GM13977 (cell line): ENCODE measurements at regions of chr17 and their contacts with region 1.

Region 1: DNA sequence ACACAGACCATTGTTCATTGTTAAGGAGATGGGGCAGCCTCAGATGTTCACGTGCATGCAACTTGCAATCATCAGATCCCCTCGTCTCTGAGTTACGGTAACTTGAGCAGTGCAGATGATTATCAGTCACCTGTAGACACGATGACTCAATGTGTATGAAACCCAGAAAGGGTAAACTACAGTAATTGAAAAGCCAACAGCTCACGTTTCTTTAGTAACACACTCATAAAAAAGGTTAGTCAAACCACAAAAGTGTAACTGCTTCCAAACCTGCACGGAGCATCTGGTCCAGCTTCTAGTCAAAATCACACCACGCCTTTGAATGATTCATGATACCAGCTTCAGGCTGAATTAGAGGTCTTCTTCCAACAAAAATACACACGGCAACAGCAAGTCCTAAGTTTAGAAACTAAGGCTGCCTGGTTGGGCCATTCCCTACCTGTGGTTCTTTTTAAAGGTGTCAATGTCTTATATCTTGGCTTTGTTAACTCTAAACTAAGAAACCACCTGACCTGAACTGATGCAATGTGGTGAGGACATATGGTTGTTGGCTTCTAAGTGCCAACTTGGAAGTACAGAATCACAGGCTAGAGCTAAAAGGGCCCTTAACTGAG is 32.3 kb downstream of the GRB7 start:
- DNase-seq: peak; percentile 60
- CTCF ChIP-seq: no peak

Region 2: DNA sequence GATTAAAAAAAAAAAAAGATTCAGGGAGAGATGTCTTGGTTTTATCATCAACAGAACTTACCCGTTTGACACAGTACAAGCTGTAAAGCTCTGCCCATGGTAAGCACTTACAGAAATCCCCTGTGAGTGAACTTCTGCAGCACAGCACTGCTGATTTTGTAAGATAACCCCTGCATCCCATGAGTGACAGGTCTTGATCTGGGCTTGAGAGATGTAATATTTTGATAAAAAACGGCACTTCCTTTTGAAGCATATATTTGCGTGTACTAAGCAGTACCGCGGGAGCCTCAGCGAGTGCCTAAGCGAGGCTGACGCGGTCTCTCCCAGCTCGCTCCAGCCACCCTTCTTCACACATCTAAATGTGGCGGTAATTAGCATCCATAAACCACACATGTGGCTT is 43.5 kb after region 1 on chr17:
- in situ Hi-C with region 1: no loop called
- DNase-seq: no peak
- CTCF ChIP-seq: no peak

Region 3: DNA sequence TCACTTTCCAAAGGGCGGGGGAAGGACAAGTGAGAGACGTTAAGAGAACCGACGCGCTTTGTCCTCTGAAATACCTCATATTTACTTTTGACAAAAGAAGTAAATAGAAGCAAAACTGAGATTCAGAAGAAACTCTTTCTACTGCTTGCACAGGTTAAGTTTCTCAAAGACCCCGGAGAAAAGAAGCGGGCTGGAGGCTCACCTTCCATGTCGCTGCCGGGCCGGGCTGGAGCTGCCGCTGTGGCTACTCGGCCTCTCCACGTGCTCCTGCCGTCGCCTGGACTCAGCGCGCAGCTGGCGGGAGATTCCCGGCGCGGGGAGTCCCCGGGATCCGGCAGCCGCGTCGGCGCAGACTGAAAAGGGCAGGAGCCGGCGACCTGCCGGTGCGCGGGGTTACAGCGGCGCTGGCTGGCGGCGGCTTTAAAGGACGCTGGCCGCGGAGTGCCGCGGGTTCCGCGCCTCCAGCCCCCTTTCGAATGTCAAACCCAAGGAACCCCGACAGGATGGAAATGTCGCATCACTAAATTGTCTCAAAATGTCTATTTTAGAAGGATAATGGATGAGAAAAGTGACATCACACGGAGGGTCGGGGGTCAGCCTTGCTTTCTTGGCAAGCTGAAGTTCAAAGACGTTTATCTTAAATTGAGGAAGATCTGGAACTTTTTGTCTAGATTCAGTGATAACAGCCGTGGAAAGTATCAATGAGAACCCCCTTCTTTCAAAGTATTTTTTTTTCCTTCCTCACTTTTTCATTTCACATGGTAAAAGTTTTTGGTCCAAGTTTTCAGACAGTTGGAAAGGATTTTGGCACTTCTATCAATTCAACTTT is 94.1 kb after region 1 on chr17 and contains the start of gene IKZF3:
- in situ Hi-C with region 1: loop called (anchors 5 kb)
- DNase-seq: peak; percentile 73
- CTCF ChIP-seq: peak; percentile 80

Region 4: GRCh38 chr17:39980351-39981206 is 210.5 kb after region 1 on chr17 and contains the start of gene PSMD3:
- in situ Hi-C with region 1: no loop called
- DNase-seq: peak; percentile 97
- CTCF ChIP-seq: peak; percentile 70